B cell (primary cell): ENCODE measurements at regions of chr6 and their contacts with region 1.

Region 1: DNA sequence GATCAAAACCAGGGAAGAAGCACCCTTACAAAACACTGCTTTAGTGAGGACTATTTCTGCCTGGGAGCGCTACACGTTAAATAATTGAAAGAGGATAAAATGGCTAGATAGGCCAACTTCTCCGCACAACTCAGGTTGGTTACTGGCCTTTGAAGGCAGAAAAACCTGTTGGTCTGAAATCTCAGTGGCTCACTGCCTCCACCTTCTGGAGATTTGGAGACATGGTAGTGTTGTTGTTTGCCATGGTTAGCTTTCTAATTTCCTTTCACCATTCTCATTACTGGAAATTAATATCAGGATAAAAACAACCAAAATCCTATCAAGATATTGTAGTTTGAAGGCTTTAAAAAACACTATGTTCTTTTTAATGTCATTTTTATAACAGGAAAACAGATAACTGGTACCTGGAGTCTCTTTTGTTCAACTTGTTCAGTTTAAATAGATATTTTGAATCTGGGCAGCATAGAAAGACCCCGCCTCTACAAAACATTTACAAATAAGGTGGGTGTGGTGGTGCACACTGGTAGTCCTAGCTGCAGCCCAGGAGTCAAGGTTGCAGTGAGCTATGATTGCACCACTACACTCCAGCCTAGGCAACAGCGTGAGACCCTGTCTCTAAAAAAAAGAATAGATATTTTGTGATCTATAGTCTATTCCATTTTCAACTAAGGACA is 27.5 kb upstream of the BCLAF1 start:
- DNase-seq: peak; percentile 72
- ATAC-seq: peak; percentile 62
- H3K4me3 ChIP-seq: no peak overlapping the region
- H3K4me3 Mint-ChIP-seq: no peak overlapping the region
- H3K27ac ChIP-seq: no peak overlapping the region
- H3K27ac Mint-ChIP-seq: no peak overlapping the region
- H3K4me1 ChIP-seq: no peaks in the 10 kb centered on the region
- H3K4me1 Mint-ChIP-seq: no peaks in the 10 kb centered on the region
- H3K27me3 ChIP-seq: no peaks in the 10 kb centered on the region
- H3K27me3 Mint-ChIP-seq: peaks cover 7% of the 10 kb centered on the region
- CTCF ChIP-seq: peak; percentile 86

Region 2: GRCh38 chr6:135506270-135506997 is 810.7 kb before region 1 on chr6:
- CTCF ChIA-PET with region 1: interaction called, 4 read pairs
- POLR2A ChIA-PET with region 1: no interaction called
- intact Hi-C with region 1: loop called (anchors 1 kb)
- DNase-seq: peak; percentile 58
- ATAC-seq: peak; percentile 67
- H3K4me3 ChIP-seq: no peak overlapping the region
- H3K4me3 Mint-ChIP-seq: no peak overlapping the region
- H3K27ac ChIP-seq: no peak overlapping the region
- H3K27ac Mint-ChIP-seq: no peak overlapping the region
- H3K4me1 ChIP-seq: no peaks in the 10 kb centered on the region
- H3K4me1 Mint-ChIP-seq: peaks cover 2% of the 10 kb centered on the region
- H3K27me3 ChIP-seq: no peaks in the 10 kb centered on the region
- H3K27me3 Mint-ChIP-seq: no peaks in the 10 kb centered on the region
- CTCF ChIP-seq: peak; percentile 81

Region 3: DNA sequence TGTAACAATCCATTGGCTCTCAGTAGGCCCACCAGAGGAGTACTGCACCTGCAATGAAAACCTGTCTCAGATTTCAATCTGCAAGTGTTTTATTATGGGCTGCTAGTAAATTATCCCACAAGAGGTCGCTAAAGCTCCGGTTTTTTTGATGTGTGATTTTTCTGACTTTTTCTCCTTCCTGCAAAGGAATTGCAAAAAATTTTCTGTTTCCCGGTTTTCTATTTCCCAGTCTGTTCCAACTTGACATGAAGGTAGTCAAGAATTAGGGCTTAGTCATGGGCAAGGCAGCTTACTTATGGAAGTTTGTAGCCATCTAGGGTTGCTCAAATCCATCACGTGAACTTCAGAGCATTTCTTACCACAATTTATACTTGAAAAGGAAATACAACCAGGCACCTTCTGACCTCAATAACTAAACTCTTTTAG is 781.2 kb before region 1 on chr6:
- CTCF ChIA-PET with region 1: interaction called, 5 read pairs
- POLR2A ChIA-PET with region 1: no interaction called
- intact Hi-C with region 1: loop called (anchors 1 kb)
- DNase-seq: peak; percentile 42
- ATAC-seq: no peak
- H3K4me3 ChIP-seq: no peak overlapping the region
- H3K4me3 Mint-ChIP-seq: no peak overlapping the region
- H3K27ac ChIP-seq: no peak overlapping the region
- H3K27ac Mint-ChIP-seq: no peak overlapping the region
- H3K4me1 ChIP-seq: no peaks in the 10 kb centered on the region
- H3K4me1 Mint-ChIP-seq: peaks cover 8% of the 10 kb centered on the region
- H3K27me3 ChIP-seq: no peaks in the 10 kb centered on the region
- H3K27me3 Mint-ChIP-seq: peaks cover 10% of the 10 kb centered on the region
- CTCF ChIP-seq: peak; percentile 74

Region 4: GRCh38 chr6:135880066-135880972 is 436.8 kb before region 1 on chr6:
- CTCF ChIA-PET with region 1: no interaction called
- POLR2A ChIA-PET with region 1: no interaction called
- intact Hi-C with region 1: no loop called
- DNase-seq: peak; percentile 75
- ATAC-seq: peak; percentile 90
- H3K4me3 ChIP-seq: peak overlapping the region; percentile 14 to 64 (median 36)
- H3K4me3 Mint-ChIP-seq: peak overlapping the region; percentile 84
- H3K27ac ChIP-seq: peak overlapping the region; percentile 91 to 99
- H3K27ac Mint-ChIP-seq: peak overlapping the region; percentile 98
- H3K4me1 ChIP-seq: peaks cover 35% of the 10 kb centered on the region in 2 donors
- H3K4me1 Mint-ChIP-seq: peaks cover 49% of the 10 kb centered on the region
- H3K27me3 ChIP-seq: no peaks in the 10 kb centered on the region
- H3K27me3 Mint-ChIP-seq: no peaks in the 10 kb centered on the region
- CTCF ChIP-seq: no peak

Region 5: DNA sequence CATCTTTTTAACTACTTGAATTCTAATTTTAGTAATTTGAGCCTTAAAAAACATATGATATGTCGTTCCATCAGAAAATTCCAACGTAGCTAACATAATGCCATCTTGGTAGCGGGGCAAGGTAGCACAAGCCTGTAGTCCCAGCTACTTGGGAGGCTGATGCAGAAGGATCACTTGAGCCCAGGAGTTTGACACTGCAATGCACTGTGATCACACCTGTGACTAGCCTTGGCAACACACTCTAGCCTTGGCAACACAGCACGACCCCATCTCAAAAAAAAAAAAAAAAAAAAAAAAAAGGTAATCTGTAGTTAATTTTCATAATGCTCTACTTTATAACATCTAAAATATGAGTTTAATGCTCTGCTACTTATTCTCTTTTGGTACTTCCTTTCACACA is 34.3 kb before region 1 on chr6:
- CTCF ChIA-PET with region 1: interaction called, 7 read pairs
- POLR2A ChIA-PET with region 1: no interaction called
- intact Hi-C with region 1: loop called (anchors 2 kb)
- DNase-seq: no peak
- ATAC-seq: no peak
- H3K4me3 ChIP-seq: no peak overlapping the region
- H3K4me3 Mint-ChIP-seq: peak overlapping the region; percentile 60
- H3K27ac ChIP-seq: peak overlapping the region in 1 of 2 donors; percentile 16
- H3K27ac Mint-ChIP-seq: no peak overlapping the region
- H3K4me1 ChIP-seq: peaks cover 43 to 68% of the 10 kb centered on the region in 2 donors
- H3K4me1 Mint-ChIP-seq: peaks cover 76% of the 10 kb centered on the region
- H3K27me3 ChIP-seq: no peaks in the 10 kb centered on the region
- H3K27me3 Mint-ChIP-seq: no peaks in the 10 kb centered on the region
- CTCF ChIP-seq: no peak